ENCODE measurements at regions of chr18 and their contacts with region 1.

Region 1: DNA sequence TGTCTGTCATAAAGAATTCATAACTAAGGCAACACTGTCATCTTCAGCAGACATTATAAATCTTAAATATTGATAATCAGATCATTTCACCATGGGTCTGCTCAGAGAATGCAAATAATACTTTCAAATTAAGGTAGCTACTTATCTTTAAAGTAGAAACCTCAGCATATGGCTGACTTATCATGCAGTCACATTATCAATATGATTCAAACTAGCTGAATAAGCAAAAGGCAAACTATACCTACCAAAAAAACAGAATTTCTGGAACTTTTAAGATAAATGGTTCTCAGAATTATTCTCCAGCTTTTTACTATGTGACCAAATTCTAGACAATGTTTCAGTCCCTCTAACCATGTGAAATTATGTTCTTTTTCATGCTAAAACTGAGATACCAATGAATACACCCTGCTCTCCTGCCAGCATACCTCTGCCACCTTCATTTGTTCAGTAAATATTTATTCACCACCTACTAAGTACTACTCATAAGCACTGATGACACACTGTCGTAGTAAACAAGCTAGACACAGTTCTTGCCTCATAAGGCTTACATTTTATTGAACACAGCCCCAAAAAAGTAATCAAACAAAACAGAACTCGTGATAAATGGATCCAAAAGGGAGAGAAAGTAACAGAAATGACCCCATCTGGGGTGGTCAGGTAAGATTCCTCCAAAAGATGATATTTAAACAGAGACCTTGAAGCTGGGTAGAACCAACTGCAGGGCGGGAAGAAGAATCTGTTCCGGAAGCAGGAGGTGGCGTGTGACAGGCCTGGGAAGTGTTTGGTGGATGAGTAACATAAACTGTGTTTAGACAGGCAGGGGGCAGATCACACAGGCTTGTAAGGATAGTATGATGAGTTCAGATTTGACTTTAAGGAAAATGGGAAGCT is 17.7 kb downstream of the SPIRE1 start:
- DNase-seq: peak; percentile 91
- ATAC-seq: peak; percentile 89
- H3K4me3 ChIP-seq: peak overlapping the region; percentile 48
- H3K27ac ChIP-seq: peak overlapping the region; percentile 95
- H3K4me1 ChIP-seq: peaks cover 78% of the 10 kb centered on the region
- H3K27me3 ChIP-seq: no peaks in the 10 kb centered on the region
- CTCF ChIP-seq: 0 out of 2 replicates have a peak, but pooled peaks have one; percentile 19

Region 2: DNA sequence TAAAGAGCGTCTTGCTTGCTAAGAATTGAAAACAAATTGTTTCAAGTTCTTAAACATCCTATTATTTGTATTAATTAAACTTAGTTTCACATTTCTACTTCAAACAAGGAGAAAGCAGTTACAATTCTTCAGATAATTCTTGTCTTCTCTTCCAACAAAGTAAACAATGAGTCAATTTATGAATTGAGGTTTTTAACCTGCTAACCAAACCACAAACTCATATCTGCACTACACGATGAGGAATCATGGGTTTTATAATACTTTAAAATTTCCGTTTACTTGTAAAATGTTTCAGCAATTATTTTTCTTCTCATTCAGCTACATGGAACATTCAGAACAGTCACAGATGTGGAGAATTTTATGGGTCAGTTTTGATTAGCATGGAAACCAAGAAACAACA is 96.5 kb before region 1 on chr18:
- CTCF ChIA-PET with region 1: interaction called, 8 read pairs
- POLR2A ChIA-PET with region 1: interaction called, 4 read pairs
- intact Hi-C with region 1: loop called (anchors 1 kb)
- DNase-seq: peak; percentile 85
- ATAC-seq: peak; percentile 72
- H3K4me3 ChIP-seq: peak overlapping the region; percentile 40
- H3K27ac ChIP-seq: peak overlapping the region; percentile 74
- H3K4me1 ChIP-seq: peaks cover 34% of the 10 kb centered on the region
- H3K27me3 ChIP-seq: no peaks in the 10 kb centered on the region
- CTCF ChIP-seq: no peak

Region 3: DNA sequence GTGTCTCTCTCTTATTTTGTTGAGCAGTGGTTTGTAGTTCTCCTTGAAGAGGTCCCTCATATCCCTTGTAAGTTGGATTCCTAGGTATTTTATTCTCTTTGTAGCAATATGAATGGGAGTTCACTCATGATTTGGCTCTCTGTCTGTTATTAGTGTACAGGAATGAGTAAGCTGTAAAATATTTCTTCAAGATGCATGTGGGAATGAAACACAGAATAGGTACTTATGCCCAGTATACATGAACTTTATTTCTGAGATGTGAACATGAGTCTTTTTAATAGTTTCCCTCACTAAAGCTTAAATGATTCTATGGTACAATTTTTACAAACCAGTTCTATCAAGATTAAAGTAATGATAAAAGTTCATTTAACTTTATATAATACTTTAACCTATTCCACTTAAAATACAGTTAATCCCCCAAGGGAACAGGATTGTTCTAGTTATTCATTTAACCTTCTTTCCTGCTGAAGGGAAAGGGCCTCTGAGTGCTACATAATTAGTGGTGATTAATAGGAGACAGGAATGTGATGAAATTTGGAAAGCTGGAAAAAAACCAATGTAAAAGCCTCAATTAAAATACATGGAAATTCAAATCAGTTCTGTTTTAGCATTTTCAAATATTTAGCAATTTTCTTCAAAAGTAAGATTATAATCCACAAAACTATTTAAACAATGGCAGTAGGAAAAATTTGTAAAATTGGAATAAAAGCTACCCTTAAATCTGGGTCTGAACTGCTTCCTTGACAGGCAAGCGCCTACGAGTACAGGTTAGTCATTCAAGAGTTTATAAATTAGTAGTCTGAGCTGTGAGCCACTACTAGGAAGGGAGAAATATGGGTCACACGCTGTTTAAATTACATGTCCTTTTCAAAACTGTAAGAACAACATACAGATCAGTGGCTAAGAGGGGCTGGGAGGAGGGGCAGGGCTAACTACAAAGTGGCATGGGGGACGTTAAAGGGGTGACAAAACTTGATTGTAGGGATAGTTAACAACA is 11.2 kb before region 1 on chr18:
- CTCF ChIA-PET with region 1: no interaction called
- POLR2A ChIA-PET with region 1: no interaction called
- intact Hi-C with region 1: loop called (anchors 1 kb)
- DNase-seq: peak; percentile 73
- ATAC-seq: peak; percentile 77
- H3K4me3 ChIP-seq: no peak overlapping the region
- H3K27ac ChIP-seq: peak overlapping the region; percentile 76
- H3K4me1 ChIP-seq: peaks cover 35% of the 10 kb centered on the region
- H3K27me3 ChIP-seq: no peaks in the 10 kb centered on the region
- CTCF ChIP-seq: no peak